GM12878 (cell line): ENCODE measurements at regions of chr17 and their contacts with region 1.

Region 1: GRCh38 chr17:76408052-76408849 is 23.8 kb downstream of the SPHK1 start:
- DNase-seq: no peak
- ATAC-seq: peak; percentile 91
- H3K4me3 ChIP-seq: no peak overlapping the region
- H3K27ac ChIP-seq: no peak overlapping the region
- H3K4me1 ChIP-seq: peaks cover 20% of the 10 kb centered on the region
- H3K27me3 ChIP-seq: no peaks in the 10 kb centered on the region
- CTCF ChIP-seq: peak; percentile 87 to 96 (median 91)
- EP300 ChIP-seq: no peak
- POLR2A ChIP-seq: no peak
- RAD21 ChIP-seq: peak; percentile 82

Region 2: GRCh38 chr17:76182016-76182764 is 226.1 kb before region 1 on chr17:
- CTCF ChIA-PET with region 1: no interaction called
- POLR2A ChIA-PET with region 1: no interaction called
- RAD21 ChIA-PET with region 1: no interaction called
- SMC1A ChIA-PET with region 1: no interaction called
- in situ Hi-C with region 1: no loop called
- intact Hi-C with region 1: no loop called
- DNase-seq: peak; percentile 94
- ATAC-seq: peak; percentile 83
- H3K4me3 ChIP-seq: no peak overlapping the region
- H3K27ac ChIP-seq: peak overlapping the region; percentile 24; the same call in 1 of the 2 replicates
- H3K4me1 ChIP-seq: peaks cover 30% of the 10 kb centered on the region
- H3K27me3 ChIP-seq: no peaks in the 10 kb centered on the region
- CTCF ChIP-seq: peak; percentile 83 to 97 (median 93); a peak in 5 of 6 replicates
- EP300 ChIP-seq: no peak
- POLR2A ChIP-seq: no peak
- RAD21 ChIP-seq: peak; percentile 81

Region 3: GRCh38 chr17:76345377-76345974 is 62.8 kb before region 1 on chr17:
- CTCF ChIA-PET with region 1: no interaction called
- POLR2A ChIA-PET with region 1: no interaction called
- RAD21 ChIA-PET with region 1: no interaction called
- SMC1A ChIA-PET with region 1: no interaction called
- in situ Hi-C with region 1: no loop called
- intact Hi-C with region 1: no loop called
- DNase-seq: no peak
- ATAC-seq: no peak
- H3K4me3 ChIP-seq: no peak overlapping the region
- H3K27ac ChIP-seq: no peak overlapping the region
- H3K4me1 ChIP-seq: no peaks in the 10 kb centered on the region
- H3K27me3 ChIP-seq: no peaks in the 10 kb centered on the region
- CTCF ChIP-seq: no peak
- EP300 ChIP-seq: no peak
- POLR2A ChIP-seq: no peak
- RAD21 ChIP-seq: no peak

Region 4: GRCh38 chr17:76452127-76452659 is 43.9 kb after region 1 on chr17:
- CTCF ChIA-PET with region 1: interaction called, 142 read pairs
- POLR2A ChIA-PET with region 1: no interaction called
- RAD21 ChIA-PET with region 1: interaction called, 55 read pairs
- SMC1A ChIA-PET with region 1: interaction called, 27 read pairs
- in situ Hi-C with region 1: no loop called
- intact Hi-C with region 1: no loop called
- DNase-seq: no peak
- ATAC-seq: peak; percentile 66
- H3K4me3 ChIP-seq: peak overlapping the region; percentile 88
- H3K27ac ChIP-seq: peak overlapping the region; percentile 33; the same call in 1 of the 2 replicates
- H3K4me1 ChIP-seq: peaks cover 9% of the 10 kb centered on the region
- H3K27me3 ChIP-seq: no peaks in the 10 kb centered on the region
- CTCF ChIP-seq: no peak
- EP300 ChIP-seq: no peak
- POLR2A ChIP-seq: no peak
- RAD21 ChIP-seq: no peak

Region 5: DNA sequence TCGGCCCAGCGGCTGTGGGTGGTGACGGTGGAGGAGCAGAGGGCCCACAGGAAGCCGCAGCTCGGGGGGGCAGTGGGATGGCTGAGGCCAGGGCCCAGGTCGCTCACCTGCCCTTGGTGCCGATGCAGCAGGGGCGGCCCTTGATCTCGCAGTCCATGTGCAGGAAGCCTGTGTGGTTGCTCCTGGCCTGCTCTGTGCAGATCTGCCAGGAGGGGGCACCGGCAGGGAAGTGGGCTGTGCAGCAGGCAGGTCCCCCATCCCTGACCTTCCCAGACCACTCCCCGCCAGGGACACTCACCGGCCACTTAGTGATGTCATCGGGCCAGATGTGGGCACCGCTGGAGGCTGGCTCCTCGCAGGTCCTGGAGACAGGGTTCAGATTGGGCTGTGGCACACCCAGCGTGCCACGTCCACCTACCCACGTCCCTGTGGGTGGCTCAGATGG is 65.3 kb after region 1 on chr17:
- CTCF ChIA-PET with region 1: no interaction called
- POLR2A ChIA-PET with region 1: no interaction called
- RAD21 ChIA-PET with region 1: no interaction called
- SMC1A ChIA-PET with region 1: no interaction called
- in situ Hi-C with region 1: no loop called
- intact Hi-C with region 1: no loop called
- DNase-seq: no peak
- ATAC-seq: peak; percentile 71
- H3K4me3 ChIP-seq: no peak overlapping the region
- H3K27ac ChIP-seq: no peak overlapping the region
- H3K4me1 ChIP-seq: no peaks in the 10 kb centered on the region
- H3K27me3 ChIP-seq: no peaks in the 10 kb centered on the region
- CTCF ChIP-seq: peak; percentile 14 to 52 (median 32); a peak in 3 of 6 replicates
- EP300 ChIP-seq: no peak
- POLR2A ChIP-seq: no peak; the same call in 1 of the 2 replicates
- RAD21 ChIP-seq: 0 out of 2 replicates have a peak, but pooled peaks have one; percentile 24